BJ (cell line): ENCODE measurements at regions of chr3 and their contacts with region 1.

Region 1: GRCh38 chr3:38346587-38347410 is at the start of gene XYLB:
- DNase-seq: no peak
- H3K4me3 ChIP-seq: peak within 1 kb of the TSS; percentile 74
- H3K27me3 ChIP-seq: no peaks in the 10 kb centered on the region
- CTCF ChIP-seq: peak; percentile 77
- polyA plus RNA-seq, gene XYLB: 3.0 and 3.2 TPM in 2 replicates

Region 2: GRCh38 chr3:38297947-38298711 is 48.7 kb before region 1 on chr3:
- CTCF ChIA-PET with region 1: interaction called, 15 read pairs
- POLR2A ChIA-PET with region 1: no interaction called
- DNase-seq: no peak
- H3K4me3 ChIP-seq: no peak overlapping the region
- H3K27me3 ChIP-seq: no peaks in the 10 kb centered on the region; the same call in 1 of the 2 replicates
- CTCF ChIP-seq: peak; percentile 52

Region 3: DNA sequence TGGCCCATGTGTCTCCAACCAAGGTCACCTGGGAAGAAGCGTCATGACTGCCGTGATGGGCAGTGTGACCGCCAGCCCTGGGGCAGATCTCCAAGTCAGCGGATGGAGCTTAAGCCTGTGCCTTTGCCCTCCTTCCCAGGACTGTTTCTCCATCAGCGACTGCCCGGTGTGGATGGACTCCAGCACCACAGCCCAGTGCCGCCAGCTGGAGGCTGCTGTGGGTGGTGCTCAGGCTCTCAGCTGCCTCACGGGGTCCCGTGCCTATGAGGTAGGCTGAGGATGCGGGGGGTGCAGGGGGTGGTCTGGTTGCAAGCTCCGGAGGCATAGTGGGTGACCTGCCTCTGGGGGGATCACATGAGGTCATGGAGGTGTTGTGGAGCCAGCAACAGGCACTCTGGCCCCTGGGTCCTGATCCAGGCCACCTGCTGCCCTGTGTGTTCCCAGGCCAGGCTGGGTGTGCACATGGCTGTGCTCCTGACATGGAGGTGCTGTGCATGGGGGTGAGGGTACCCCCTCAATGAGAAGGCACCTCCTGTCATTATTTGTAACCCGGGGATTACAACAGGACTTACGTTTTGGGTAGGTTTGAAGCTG is 18.8 kb after region 1 on chr3:
- CTCF ChIA-PET with region 1: interaction called, 13 read pairs
- POLR2A ChIA-PET with region 1: no interaction called
- DNase-seq: no peak
- H3K4me3 ChIP-seq: no peak overlapping the region
- H3K27me3 ChIP-seq: no peaks in the 10 kb centered on the region
- CTCF ChIP-seq: no peak

Region 4: GRCh38 chr3:38411591-38411990 is 64.8 kb after region 1 on chr3:
- CTCF ChIA-PET with region 1: no interaction called
- POLR2A ChIA-PET with region 1: no interaction called
- DNase-seq: no peak
- H3K4me3 ChIP-seq: no peak overlapping the region
- H3K27me3 ChIP-seq: no peaks in the 10 kb centered on the region
- CTCF ChIP-seq: no peak

Region 5: DNA sequence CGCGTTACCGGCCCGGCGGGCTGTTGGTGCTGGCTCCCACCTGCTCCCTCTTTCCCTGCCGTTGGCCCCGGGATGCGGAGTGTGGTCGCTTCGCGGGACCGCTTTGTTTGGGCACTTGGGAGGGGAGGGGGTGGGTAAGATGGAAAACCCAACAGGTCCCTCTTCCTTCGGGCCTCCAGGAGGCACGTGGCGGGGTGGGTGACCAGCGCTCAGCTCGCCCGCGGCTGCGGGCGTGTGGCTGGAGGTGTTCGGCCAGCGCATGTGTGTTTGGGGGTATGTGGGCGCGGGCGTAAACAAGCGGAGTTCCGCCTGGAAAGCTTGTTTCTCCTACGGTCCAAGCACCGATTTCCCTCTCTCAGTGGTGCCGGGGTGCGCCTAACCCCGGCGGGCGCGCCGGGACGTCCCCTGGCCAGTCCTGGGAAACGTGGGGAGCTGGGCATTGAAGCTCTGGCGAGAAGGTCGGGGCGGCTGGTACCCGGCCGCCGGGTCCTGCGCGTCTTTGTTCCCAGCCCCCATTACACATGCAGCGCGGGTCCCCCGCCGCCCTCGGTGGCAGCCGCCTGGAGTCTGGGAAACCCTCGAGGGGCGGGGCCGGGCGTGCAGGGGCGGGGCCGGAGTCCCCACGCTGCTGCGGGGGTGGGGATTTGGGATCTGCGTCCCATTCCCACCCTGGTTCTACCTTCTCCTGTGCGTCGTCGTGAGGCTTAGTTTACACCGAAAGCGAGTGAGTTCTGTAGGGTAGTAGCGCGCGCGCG is 108.3 kb after region 1 on chr3:
- CTCF ChIA-PET with region 1: interaction called, 13 read pairs
- POLR2A ChIA-PET with region 1: no interaction called
- DNase-seq: no peak
- H3K4me3 ChIP-seq: peak overlapping the region; percentile 69
- H3K27me3 ChIP-seq: no peaks in the 10 kb centered on the region
- CTCF ChIP-seq: no peak

Region 6: GRCh38 chr3:38773528-38773927 is 426.7 kb after region 1 on chr3:
- CTCF ChIA-PET with region 1: no interaction called
- POLR2A ChIA-PET with region 1: no interaction called
- DNase-seq: no peak
- H3K4me3 ChIP-seq: no peak overlapping the region
- H3K27me3 ChIP-seq: no peaks in the 10 kb centered on the region
- CTCF ChIP-seq: no peak

Region 7: DNA sequence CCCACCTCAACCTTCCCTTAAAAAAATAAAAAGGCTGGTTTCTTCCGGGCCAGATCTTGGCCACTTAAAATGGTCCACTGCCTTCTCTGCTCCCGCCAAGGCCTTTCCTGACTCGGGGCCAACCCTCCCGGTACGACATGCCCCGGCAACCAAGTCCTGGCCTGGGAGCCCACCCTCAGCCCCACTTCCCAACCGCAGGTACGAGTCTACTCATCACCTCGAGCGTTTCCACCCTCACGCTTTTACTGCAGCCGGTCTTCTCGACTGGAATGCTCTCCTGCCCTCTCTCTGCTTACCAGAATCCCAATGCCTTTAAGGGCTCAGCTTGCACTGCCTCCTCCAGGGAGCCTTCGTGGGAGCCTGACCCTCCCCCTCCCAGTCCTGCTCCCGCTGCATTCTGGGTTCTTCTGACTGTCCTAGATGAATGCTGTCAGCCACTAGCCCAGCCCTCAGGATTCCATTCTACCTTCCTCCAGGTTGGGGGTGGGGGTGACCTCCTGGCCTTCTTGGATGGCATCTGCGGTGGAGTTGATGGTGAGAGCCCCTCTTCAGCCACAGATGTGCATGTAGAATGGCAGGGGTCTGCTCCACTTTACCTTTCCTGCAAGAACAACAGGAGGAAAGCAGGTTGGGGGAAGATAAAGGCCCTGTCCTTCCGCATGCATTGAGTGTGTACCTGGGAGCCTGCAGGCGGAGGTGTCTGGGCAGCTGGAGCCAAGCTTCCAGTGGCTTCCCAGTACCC is 807.7 kb after region 1 on chr3:
- CTCF ChIA-PET with region 1: no interaction called
- POLR2A ChIA-PET with region 1: no interaction called
- DNase-seq: no peak
- H3K4me3 ChIP-seq: no peak overlapping the region
- H3K27me3 ChIP-seq: no peaks in the 10 kb centered on the region
- CTCF ChIP-seq: no peak